A549 (cell line): ENCODE measurements at regions of chr2 and their contacts with region 1.

Region 1: GRCh38 chr2:200471324-200471848 is 38.5 kb downstream of the KCTD18 start:
- DNase-seq: peak; percentile 57 to 61
- ATAC-seq: peak; percentile 82 to 89
- H3K4me3 ChIP-seq: no peak overlapping the region
- H3K27ac ChIP-seq: peak overlapping the region; percentile 22 to 56; a peak in 4 of 6 replicates
- H3K4me1 ChIP-seq: no peaks in the 10 kb centered on the region
- CTCF ChIP-seq: peak; percentile 81
- EP300 ChIP-seq: no peak
- POLR2A ChIP-seq: no peak
- RAD21 ChIP-seq: peak; percentile 86 to 88

Region 2: DNA sequence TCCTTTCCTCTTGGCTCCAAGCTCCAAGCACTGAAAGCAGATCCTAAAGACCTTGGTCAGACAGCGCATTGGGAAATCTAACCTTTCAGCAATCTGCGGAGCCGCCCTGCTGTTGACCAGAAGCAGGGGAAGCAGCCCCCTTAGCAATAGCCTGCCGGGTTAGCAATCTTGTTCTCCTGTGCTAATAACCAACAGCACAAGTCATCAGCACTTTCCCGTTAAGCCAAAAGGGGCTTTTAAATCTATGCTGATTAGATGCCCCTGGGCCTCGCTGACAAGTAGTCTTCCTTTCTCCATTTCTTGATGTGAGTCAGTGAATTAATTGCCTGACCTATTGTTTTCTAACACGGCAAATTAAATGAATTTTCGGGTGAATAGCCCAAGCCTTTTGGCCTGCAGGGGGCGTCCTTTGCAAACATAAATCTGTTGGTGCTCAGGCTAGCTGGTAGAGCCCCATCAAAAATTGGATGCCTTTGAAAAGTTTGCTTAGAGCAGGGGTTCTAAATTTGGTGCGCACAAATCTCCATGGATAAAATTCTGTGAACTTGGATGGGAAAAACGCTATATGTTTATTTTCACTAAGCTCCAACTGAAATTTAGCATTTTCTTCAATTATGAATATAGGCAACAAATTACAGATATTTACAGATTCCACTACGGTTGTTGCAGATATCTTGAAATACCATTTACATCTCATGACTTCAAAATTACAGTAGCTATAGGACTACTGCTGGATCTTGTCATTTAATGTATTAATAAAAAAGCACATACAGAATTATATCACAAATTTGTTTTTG is 491.4 kb before region 1 on chr2:
- CTCF ChIA-PET with region 1: interaction called, 35 read pairs
- POLR2A ChIA-PET with region 1: no interaction called
- DNase-seq: peak; percentile 41 to 66
- ATAC-seq: peak; percentile 62 to 81; a peak in 5 of 6 replicates
- H3K4me3 ChIP-seq: no peak overlapping the region
- H3K27ac ChIP-seq: peak overlapping the region; percentile 72
- H3K4me1 ChIP-seq: peaks cover 39% of the 10 kb centered on the region
- CTCF ChIP-seq: peak; percentile 94
- EP300 ChIP-seq: no peak
- POLR2A ChIP-seq: no peak
- RAD21 ChIP-seq: peak; percentile 93 to 97

Region 3: GRCh38 chr2:200405599-200406298 is 65.6 kb before region 1 on chr2:
- CTCF ChIA-PET with region 1: interaction called, 14 read pairs
- POLR2A ChIA-PET with region 1: no interaction called
- DNase-seq: peak; percentile 79 to 92
- ATAC-seq: peak; percentile 93 to 95
- H3K4me3 ChIP-seq: peak overlapping the region; percentile 23; the same call in 1 of the 3 replicates
- H3K27ac ChIP-seq: peak overlapping the region; percentile 83 to 90
- H3K4me1 ChIP-seq: peaks cover 60% of the 10 kb centered on the region
- CTCF ChIP-seq: no peak
- EP300 ChIP-seq: peak; percentile 49 to 54; a peak in 2 of 5 replicates
- POLR2A ChIP-seq: no peak
- RAD21 ChIP-seq: peak; percentile 20 to 36; a peak in 2 of 5 replicates

Region 4: DNA sequence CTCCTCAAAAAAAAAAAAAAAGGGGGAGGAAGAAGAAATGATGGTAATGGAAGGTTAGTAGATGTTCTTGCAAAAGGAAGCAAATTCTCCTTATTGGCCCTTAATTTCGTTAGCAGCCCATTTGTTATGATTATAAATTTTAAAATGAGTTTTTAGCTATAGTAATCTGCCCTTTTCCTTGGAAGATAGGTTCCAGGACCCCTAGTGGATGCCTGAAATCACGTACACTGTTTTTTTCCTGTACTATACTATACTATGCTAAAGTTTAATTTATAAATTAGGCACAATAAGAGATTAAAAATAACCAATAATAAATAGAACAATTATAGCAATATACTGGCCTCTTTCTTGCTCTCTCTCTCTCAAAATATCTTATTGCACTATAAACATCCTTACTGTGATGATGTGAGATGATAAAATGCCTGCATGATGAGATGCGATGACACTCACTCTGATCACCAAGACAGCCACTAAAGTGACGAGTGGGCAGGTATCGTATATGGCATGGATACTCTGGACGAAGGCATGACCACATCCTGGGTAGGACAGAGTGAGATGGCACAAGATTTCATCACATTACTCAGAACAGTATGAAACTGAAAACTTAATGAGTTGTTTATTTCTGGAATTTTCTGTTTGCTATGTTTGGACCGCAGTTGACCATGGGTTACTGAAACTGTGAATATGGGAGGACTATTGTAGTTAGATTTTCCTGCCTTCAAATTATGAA is 48.7 kb before region 1 on chr2:
- CTCF ChIA-PET with region 1: interaction called, 17 read pairs
- POLR2A ChIA-PET with region 1: no interaction called
- DNase-seq: no peak
- ATAC-seq: peak in 1 of 2 experiments; percentile 46; a peak in 1 of 6 replicates
- H3K4me3 ChIP-seq: no peak overlapping the region
- H3K27ac ChIP-seq: no peak overlapping the region
- H3K4me1 ChIP-seq: peaks cover 5% of the 10 kb centered on the region; the same call in 2 of the 3 replicates
- CTCF ChIP-seq: peak; percentile 16; the same call in 1 of the 3 replicates
- EP300 ChIP-seq: no peak
- POLR2A ChIP-seq: no peak
- RAD21 ChIP-seq: 0 out of 5 replicates have a peak, but pooled peaks of 1 of the 2 experiments have one; percentile 13

Region 5: GRCh38 chr2:200624658-200625057 is 153.3 kb after region 1 on chr2:
- CTCF ChIA-PET with region 1: no interaction called
- POLR2A ChIA-PET with region 1: no interaction called
- DNase-seq: peak in 1 of 2 experiments; percentile 39
- ATAC-seq: peak in 1 of 2 experiments; percentile 39; a peak in 2 of 6 replicates
- H3K4me3 ChIP-seq: no peak overlapping the region
- H3K27ac ChIP-seq: peak overlapping the region; percentile 70
- H3K4me1 ChIP-seq: peaks cover 53% of the 10 kb centered on the region
- CTCF ChIP-seq: no peak
- EP300 ChIP-seq: no peak
- POLR2A ChIP-seq: no peak
- RAD21 ChIP-seq: no peak